CD4-positive, alpha-beta memory T cell (primary cell): ENCODE measurements at regions of chr17 and their contacts with region 1.

Region 1: DNA sequence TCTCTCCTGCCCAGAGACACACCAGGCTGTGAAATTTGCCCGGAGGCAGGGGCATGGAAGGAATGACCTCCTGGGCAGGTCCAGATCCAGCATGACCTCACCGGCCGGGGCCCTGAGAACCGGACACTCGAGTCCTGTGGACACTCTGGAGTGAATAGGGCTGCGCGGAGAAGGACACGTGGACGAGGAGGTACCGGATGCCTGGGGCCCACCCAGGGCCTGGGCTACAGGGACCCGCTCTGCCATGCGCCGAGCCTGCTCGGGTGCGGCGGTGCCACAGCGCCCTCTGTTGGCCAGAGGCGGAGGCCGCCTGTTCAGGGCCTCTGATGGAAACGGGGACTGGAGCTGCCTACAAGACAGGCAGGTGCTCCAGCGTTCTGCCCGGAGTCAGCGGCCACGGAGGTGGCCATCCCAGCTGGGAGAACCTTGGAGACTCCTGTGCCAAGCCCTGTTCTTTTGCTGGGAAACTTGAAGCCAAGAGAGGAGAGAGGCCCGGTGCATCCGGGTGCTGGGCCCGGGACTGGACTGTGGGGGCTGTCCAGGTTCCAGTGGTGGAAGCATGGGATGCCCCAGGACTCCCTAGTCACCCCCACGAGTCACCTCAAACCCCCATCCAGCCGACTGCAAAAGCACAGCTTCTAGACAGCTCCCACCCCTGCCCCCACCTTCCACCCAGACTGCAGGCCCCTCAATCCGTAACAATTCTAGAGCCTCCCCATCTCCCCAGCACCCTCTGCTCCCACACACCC is 19.3 kb upstream of the NXPH3 start:
- DNase-seq: peak; percentile 69 to 80 (median 74)
- H3K4me3 ChIP-seq: no peak overlapping the region
- H3K4me3 Mint-ChIP-seq: peak overlapping the region in 1 of 8 donors; percentile 55
- H3K27ac ChIP-seq: no peak overlapping the region
- H3K27ac Mint-ChIP-seq: no peak overlapping the region
- H3K4me1 ChIP-seq: peaks cover 6% of the 10 kb centered on the region
- H3K4me1 Mint-ChIP-seq: peaks cover 5 to 7% (median 5%) of the 10 kb centered on the region in 4 donors
- H3K27me3 ChIP-seq: no peaks in the 10 kb centered on the region
- H3K27me3 Mint-ChIP-seq: peaks cover 1 to 3% of the 10 kb centered on the region in 2 donors

Region 2: DNA sequence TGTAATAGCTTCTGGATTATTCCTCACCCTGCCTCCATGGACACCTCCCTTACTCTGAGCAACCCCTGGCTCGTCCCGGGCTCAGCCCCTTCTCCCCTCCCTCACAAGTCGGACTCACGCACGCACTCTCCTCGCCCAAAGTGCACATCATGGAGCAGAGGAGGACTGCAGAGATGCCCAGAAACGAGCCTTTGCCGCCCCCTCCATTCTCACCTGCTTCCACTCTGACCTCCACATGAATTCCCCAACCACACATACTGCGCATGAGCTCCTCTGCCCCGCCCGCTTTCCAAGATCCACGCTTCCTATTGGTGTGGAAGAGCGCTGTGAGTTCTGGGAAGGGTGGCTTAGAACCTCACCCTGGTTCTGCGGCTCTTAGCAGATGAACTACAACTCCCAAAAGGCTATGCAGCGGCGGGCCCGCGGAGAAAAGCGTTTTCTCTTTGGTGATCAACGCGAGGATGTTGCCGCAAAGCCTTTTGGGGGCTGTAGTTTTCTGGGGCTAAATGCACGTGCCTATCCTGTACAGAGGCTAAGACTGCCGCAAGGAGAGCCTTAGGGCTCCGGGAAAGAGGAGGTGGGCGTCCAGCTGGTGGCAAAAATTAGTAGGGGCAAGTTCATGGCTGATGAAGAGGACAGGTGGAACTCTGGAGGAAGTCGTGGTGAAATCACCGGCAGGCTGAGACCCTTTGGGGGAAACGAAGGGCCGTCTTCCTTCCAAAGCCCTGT is 141.6 kb before region 1 on chr17 and contains the start of gene PHB1:
- CTCF ChIA-PET with region 1: interaction called, 163 read pairs
- POLR2A ChIA-PET with region 1: interaction called, 4 read pairs
- intact Hi-C with region 1: no loop called
- DNase-seq: peak; percentile 93 to 99 (median 94)
- H3K4me3 ChIP-seq: peak within 1 kb of the TSS; percentile 81 to 89
- H3K4me3 Mint-ChIP-seq: peak within 1 kb of the TSS; percentile 97 to 99 (median 98)
- H3K27ac ChIP-seq: peak within 1 kb of the TSS; percentile 65
- H3K27ac Mint-ChIP-seq: peak within 1 kb of the TSS; percentile 78 to 99 (median 96)
- H3K4me1 ChIP-seq: peaks cover 18% of the 10 kb centered on the region
- H3K4me1 Mint-ChIP-seq: peaks cover 14 to 27% (median 20%) of the 10 kb centered on the region in 4 donors
- H3K27me3 ChIP-seq: no peaks in the 10 kb centered on the region
- H3K27me3 Mint-ChIP-seq: no peaks in the 10 kb centered on the region
- total RNA-seq, gene PHB1: 62.0 to 64.2 TPM

Region 3: DNA sequence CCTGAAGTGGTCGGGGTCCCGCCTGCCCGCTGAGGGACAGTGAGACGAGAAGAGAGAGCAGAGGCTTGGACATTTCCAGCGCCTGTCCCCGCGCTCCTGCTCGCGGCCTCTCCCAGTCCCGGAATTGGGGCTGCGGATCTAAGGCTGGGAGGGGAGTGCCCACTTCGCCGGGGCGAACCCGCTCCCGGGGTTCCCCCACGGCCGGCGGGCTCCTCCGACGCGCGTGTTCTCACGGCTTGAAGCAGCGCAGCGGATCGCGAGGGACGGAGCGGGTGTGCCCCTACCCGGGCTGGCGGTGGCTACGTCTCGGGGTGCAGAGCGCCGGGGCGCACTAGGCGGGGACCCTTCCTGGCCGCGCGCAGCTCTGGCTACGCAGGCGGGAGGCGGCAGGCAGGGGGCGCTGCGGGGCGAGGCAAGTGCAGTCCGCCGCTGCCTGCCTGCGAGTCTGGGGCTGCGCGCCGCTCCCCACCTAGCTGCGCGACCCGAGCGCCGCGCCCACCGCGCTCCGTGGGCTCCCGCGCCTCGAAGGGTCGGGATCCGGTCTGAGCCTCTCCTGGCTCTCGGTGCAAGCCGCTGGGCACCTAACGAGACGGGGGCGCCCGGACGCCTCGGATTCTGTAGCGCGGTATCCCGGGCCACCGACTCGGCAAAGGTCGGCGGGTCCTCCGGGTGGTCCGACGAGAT is 60.1 kb before region 1 on chr17:
- CTCF ChIA-PET with region 1: interaction called, 34 read pairs
- POLR2A ChIA-PET with region 1: interaction called, 4 read pairs
- intact Hi-C with region 1: loop called (anchors 1 kb)
- DNase-seq: peak; percentile 79 to 84 (median 80)
- H3K4me3 ChIP-seq: peak overlapping the region; percentile 23 to 76
- H3K4me3 Mint-ChIP-seq: peak overlapping the region; percentile 74 to 87 (median 82)
- H3K27ac ChIP-seq: no peak overlapping the region
- H3K27ac Mint-ChIP-seq: peak overlapping the region in 2 of 7 donors; percentile 12 to 25
- H3K4me1 ChIP-seq: peaks cover 34% of the 10 kb centered on the region
- H3K4me1 Mint-ChIP-seq: peaks cover 11 to 41% (median 16%) of the 10 kb centered on the region in 4 donors
- H3K27me3 ChIP-seq: peaks cover 33% of the 10 kb centered on the region
- H3K27me3 Mint-ChIP-seq: peaks cover 32% of the 10 kb centered on the region in 2 donors

Region 4: GRCh38 chr17:49567871-49568694 is 11.7 kb after region 1 on chr17:
- CTCF ChIA-PET with region 1: interaction called, 29 read pairs
- POLR2A ChIA-PET with region 1: no interaction called
- intact Hi-C with region 1: no loop called
- DNase-seq: peak; percentile 68 to 77 (median 74)
- H3K4me3 ChIP-seq: peak overlapping the region in 1 of 2 donors; percentile 56
- H3K4me3 Mint-ChIP-seq: peak overlapping the region; percentile 28 to 82 (median 60)
- H3K27ac ChIP-seq: no peak overlapping the region
- H3K27ac Mint-ChIP-seq: peak overlapping the region in 2 of 7 donors; percentile 46 to 54
- H3K4me1 ChIP-seq: peaks cover 10% of the 10 kb centered on the region
- H3K4me1 Mint-ChIP-seq: peaks cover 8 to 29% (median 19%) of the 10 kb centered on the region in 4 donors
- H3K27me3 ChIP-seq: no peaks in the 10 kb centered on the region
- H3K27me3 Mint-ChIP-seq: peaks cover 6 to 11% of the 10 kb centered on the region in 2 donors